ENCODE measurements at regions of chr2 and their contacts with region 1.

Region 1: DNA sequence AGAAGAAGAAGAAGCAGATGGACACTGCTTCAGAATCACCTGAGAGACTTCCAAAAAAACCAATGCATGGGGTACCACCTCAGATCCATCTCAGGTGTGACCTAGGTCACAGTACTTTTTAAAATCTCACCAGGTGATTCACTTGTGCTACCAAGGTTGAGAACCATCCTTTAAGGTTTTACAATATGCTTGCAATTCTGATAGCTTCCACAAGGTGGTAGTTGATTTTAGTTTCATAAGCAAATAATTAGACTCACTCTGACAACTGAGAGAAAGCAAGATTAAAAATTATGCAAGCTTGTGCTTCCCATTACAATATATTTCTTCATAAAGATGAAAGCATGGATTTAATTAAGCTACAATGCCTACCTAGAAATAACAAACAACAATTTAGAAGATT is 355.1 kb downstream of the EN1 start:
- DNase-seq: no peak
- H3K4me3 ChIP-seq: no peak overlapping the region
- H3K27ac ChIP-seq: no peak overlapping the region
- H3K4me1 ChIP-seq: peaks cover 8 to 16% (median 13%) of the 10 kb centered on the region in 4 experiments; a peak in 6 of 7 replicates
- H3K27me3 ChIP-seq: no peaks in the 10 kb centered on the region
- CTCF ChIP-seq: peak in 1 of 3 experiments; percentile 28; a peak in 1 of 4 replicates
- EP300 ChIP-seq: no peak
- POLR2A ChIP-seq: no peak
- RAD21 ChIP-seq: peak in 1 of 2 experiments; percentile 15; a peak in 1 of 4 replicates

Region 2: GRCh38 chr2:118473846-118474540 is 18.3 kb before region 1 on chr2:
- CTCF ChIA-PET with region 1: interaction called, 13 read pairs
- POLR2A ChIA-PET with region 1: no interaction called
- DNase-seq: no peak
- H3K4me3 ChIP-seq: no peak overlapping the region
- H3K27ac ChIP-seq: no peak overlapping the region
- H3K4me1 ChIP-seq: peaks cover 3 to 7% (median 6%) of the 10 kb centered on the region in 4 experiments; a peak in 6 of 7 replicates
- H3K27me3 ChIP-seq: no peaks in the 10 kb centered on the region
- CTCF ChIP-seq: no peak
- EP300 ChIP-seq: no peak
- POLR2A ChIP-seq: no peak
- RAD21 ChIP-seq: no peak

Region 3: DNA sequence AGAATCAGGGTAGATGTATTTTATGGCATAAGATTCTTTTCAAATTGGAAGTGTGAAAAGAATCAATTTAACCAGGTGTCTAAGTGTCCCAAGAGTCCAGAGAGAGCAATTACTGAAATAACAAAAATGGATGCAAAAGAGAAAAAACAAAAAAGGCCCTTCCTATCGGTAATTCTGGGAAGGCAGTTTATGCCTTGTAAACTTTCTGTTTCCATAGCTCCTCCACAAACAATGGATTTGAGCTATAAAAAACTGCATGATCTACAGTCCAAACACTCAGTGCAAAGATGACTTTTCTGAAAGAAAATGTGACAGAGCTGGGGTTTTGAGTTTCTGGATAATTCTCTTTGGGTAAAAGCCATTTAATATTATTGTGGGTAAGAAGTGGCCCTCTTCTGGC is 11.0 kb before region 1 on chr2:
- CTCF ChIA-PET with region 1: interaction called, 41 read pairs
- POLR2A ChIA-PET with region 1: no interaction called
- DNase-seq: no peak
- H3K4me3 ChIP-seq: no peak overlapping the region
- H3K27ac ChIP-seq: no peak overlapping the region
- H3K4me1 ChIP-seq: 0 out of 7 replicates have a peak, but pooled peaks cover 0 to 3% (median 1%) of the 10 kb centered on the region in 4 experiments
- H3K27me3 ChIP-seq: no peaks in the 10 kb centered on the region
- CTCF ChIP-seq: no peak
- EP300 ChIP-seq: no peak
- POLR2A ChIP-seq: no peak
- RAD21 ChIP-seq: no peak

Region 4: GRCh38 chr2:118509319-118510004 is 17.1 kb after region 1 on chr2:
- CTCF ChIA-PET with region 1: interaction called, 14 read pairs
- POLR2A ChIA-PET with region 1: interaction called, 3 read pairs
- DNase-seq: no peak
- H3K4me3 ChIP-seq: no peak overlapping the region
- H3K27ac ChIP-seq: no peak overlapping the region
- H3K4me1 ChIP-seq: 0 out of 7 replicates have a peak, but pooled peaks cover 0 to 3% (median 0%) of the 10 kb centered on the region in 4 experiments
- H3K27me3 ChIP-seq: peaks cover 0 to 1% (median 0%) of the 10 kb centered on the region in 4 experiments; a peak in 1 of 7 replicates
- CTCF ChIP-seq: no peak
- EP300 ChIP-seq: no peak
- POLR2A ChIP-seq: no peak
- RAD21 ChIP-seq: no peak

Measured in H1 (cell line).